GM12878 (cell line): ENCODE measurements at regions of chr5 and their contacts with region 1.

Region 1: DNA sequence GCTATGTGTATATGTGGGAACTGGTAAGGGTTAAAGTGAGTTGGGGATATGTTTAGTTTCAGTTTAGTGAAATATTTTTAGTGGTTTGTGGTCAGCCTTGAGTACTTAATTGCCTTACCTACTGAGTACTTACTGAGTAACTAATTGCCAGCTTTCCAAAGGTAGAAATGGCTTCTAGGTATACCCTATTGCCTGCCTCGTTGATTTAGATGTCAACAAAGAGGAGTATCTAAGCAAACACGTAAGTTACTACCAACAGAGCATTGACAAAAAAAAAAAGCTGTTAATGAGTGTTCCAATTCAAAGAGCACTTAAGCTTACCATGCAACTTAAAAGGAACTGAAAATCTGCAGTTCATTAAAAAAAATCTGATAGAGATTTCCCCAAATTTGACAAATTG is 8.8 kb downstream of the ATP10B start:
- DNase-seq: peak; percentile 89
- ATAC-seq: peak; percentile 99
- H3K4me3 ChIP-seq: 0 out of 2 replicates have a peak overlapping the region, but pooled peaks have one; percentile 25
- H3K27ac ChIP-seq: no peak overlapping the region
- H3K4me1 ChIP-seq: no peaks in the 10 kb centered on the region
- H3K27me3 ChIP-seq: no peaks in the 10 kb centered on the region
- CTCF ChIP-seq: no peak
- EP300 ChIP-seq: peak; percentile 92 to 94
- POLR2A ChIP-seq: no peak
- RAD21 ChIP-seq: no peak

Region 2: DNA sequence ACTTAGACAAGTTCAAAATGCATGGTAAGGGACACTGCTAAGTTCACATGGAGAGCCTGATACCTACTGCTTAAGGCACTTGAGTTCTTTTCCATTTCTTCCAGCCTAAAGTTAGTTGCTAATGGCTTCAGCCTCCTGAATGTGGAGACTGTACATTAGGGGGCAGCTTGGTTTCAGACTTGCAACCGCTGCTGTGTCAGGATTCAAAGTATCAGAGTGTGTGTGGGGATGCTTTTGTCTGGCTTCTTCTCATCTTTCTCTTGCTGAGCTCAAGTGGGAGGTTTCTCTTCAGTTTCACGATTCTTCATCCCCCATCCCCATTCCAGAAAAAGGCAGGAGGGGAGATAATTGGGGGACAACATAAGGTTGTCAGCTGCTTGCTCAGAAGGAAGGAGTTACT is 40.6 kb before region 1 on chr5:
- CTCF ChIA-PET with region 1: interaction called, 12 read pairs
- POLR2A ChIA-PET with region 1: interaction called, 12 read pairs
- RAD21 ChIA-PET with region 1: interaction called, 6 read pairs
- SMC1A ChIA-PET with region 1: interaction called, 53 read pairs
- in situ Hi-C with region 1: no loop called
- intact Hi-C with region 1: no loop called
- DNase-seq: no peak
- ATAC-seq: peak; percentile 73
- H3K4me3 ChIP-seq: no peak overlapping the region
- H3K27ac ChIP-seq: no peak overlapping the region
- H3K4me1 ChIP-seq: no peaks in the 10 kb centered on the region; the same call in 1 of the 2 replicates
- H3K27me3 ChIP-seq: no peaks in the 10 kb centered on the region
- CTCF ChIP-seq: peak; percentile 24 to 70 (median 34); a peak in 3 of 6 replicates
- EP300 ChIP-seq: no peak
- POLR2A ChIP-seq: no peak
- RAD21 ChIP-seq: peak; percentile 56

Region 3: DNA sequence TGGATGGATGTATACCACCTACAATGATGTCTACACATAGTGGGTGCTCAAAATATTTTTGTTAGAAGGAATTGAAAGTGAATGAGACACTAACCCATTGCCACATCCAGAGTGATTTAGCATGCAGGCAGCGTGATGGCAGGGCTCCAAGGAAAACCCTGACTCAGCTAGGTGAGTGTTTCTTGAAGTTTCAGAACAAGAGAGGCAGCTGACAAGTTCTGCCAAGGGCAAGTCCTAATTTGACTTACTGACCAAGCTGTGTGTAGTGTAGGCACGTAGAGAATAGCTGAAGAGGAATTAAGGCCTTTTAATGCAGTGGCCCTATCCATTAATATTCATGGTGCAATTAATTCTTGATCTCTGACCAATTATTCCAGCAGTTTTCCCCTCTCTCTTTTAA is 116.6 kb after region 1 on chr5:
- CTCF ChIA-PET with region 1: no interaction called
- POLR2A ChIA-PET with region 1: no interaction called
- RAD21 ChIA-PET with region 1: interaction called, 5 read pairs
- SMC1A ChIA-PET with region 1: interaction called, 5 read pairs
- in situ Hi-C with region 1: no loop called
- intact Hi-C with region 1: loop called (anchors 1 kb)
- DNase-seq: peak; percentile 62
- ATAC-seq: peak; percentile 76
- H3K4me3 ChIP-seq: no peak overlapping the region
- H3K27ac ChIP-seq: no peak overlapping the region
- H3K4me1 ChIP-seq: no peaks in the 10 kb centered on the region; the same call in 1 of the 2 replicates
- H3K27me3 ChIP-seq: no peaks in the 10 kb centered on the region
- CTCF ChIP-seq: no peak
- EP300 ChIP-seq: 0 out of 4 replicates have a peak, but pooled peaks of 1 of the 2 experiments have one; percentile 12
- POLR2A ChIP-seq: no peak
- RAD21 ChIP-seq: no peak

Region 4: GRCh38 chr5:161311146-161311708 is 468.0 kb after region 1 on chr5:
- CTCF ChIA-PET with region 1: no interaction called
- POLR2A ChIA-PET with region 1: no interaction called
- RAD21 ChIA-PET with region 1: no interaction called
- SMC1A ChIA-PET with region 1: no interaction called
- in situ Hi-C with region 1: no loop called
- intact Hi-C with region 1: loop called (anchors 2 kb)
- DNase-seq: peak; percentile 78
- ATAC-seq: peak; percentile 93
- H3K4me3 ChIP-seq: no peak overlapping the region
- H3K27ac ChIP-seq: peak overlapping the region; percentile 69
- H3K4me1 ChIP-seq: peaks cover 35% of the 10 kb centered on the region
- H3K27me3 ChIP-seq: no peaks in the 10 kb centered on the region
- CTCF ChIP-seq: no peak
- EP300 ChIP-seq: peak; percentile 13 to 66; a peak in 2 of 4 replicates
- POLR2A ChIP-seq: no peak
- RAD21 ChIP-seq: no peak